Posterior cingulate gyrus (tissue), 11 donors: ENCODE measurements at regions of chr17 and their contacts with region 1.

Region 1: GRCh38 chr17:70144260-70144846 is 25.0 kb upstream of the KCNJ2 start:
- DNase-seq: no peak

Region 2: GRCh38 chr17:69574257-69575197 is 569.8 kb before region 1 on chr17:
- intact Hi-C with region 1: loop called (anchors 5 kb)
- DNase-seq: no peak

Region 3: DNA sequence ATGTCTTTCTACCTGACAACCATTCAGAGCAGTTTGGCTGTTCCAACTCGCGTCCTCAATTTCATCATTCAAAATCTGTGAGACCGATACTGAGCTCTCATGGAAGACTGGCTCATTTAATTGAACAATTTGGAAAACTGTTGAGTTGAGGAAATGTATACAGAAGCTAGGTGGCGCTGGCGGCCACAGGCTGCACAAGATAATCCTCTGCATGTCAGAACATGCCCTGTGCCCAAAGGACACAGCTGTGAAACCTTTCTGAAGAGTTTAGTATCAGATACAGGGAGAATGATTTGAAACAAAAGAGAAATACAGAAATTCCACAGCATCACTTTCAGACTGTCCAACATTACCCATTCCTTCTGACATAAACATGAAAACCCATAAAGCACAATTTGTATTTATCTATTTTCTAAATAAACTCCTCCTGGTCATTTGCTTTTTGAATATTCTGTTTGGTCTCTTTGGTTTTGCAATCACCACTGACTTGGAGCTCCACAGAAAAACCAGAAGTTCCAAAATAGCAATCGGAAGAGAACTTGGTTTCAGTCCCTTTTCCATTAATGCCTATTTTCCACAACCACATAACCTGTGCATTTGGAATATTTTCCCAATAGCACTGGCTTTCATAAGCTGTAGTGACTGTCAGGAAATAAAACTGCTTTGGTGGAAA is 537.1 kb before region 1 on chr17:
- intact Hi-C with region 1: loop called (anchors 5 kb)
- DNase-seq: peak; percentile 37 to 96 (median 72)

Region 4: GRCh38 chr17:69913216-69913615 is 231.1 kb before region 1 on chr17:
- intact Hi-C with region 1: no loop called
- DNase-seq: no peak

Region 5: GRCh38 chr17:70242781-70243437 is 98.6 kb after region 1 on chr17:
- intact Hi-C with region 1: no loop called
- DNase-seq: no peak